CD4-positive, alpha-beta memory T cell (primary cell): ENCODE measurements at regions of chr21 and their contacts with region 1.

Region 1: DNA sequence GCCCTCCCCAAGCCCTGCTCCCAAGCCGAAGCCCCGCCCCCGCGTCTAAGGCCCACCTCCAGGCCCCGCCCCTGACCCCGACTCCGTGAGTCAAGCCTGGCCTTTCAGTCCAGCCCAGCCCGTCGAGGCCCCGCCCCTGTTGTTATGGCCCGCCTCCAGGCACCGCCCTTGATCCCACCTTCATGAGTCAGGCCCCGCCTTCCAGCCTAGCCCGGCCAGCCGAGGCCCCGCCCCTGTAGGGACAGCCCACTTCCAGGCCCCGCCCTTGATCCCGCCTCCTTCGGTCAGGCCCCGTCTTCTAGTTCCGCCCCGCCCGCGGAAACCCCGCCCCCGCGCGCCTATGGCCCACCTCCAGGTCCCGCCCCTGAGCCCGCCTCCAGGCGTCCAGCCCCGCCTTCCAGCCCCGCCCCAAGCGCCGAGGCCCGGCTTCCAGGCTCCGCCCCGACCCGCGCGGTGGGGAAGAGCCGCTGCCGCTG is 247 bp upstream of the DOP1B start:
- DNase-seq: peak; percentile 99 to 100 (median 100)
- H3K4me3 ChIP-seq: peak overlapping the region; percentile 63 to 70
- H3K4me3 Mint-ChIP-seq: peak overlapping the region; percentile 79 to 92 (median 86)
- H3K27ac ChIP-seq: peak overlapping the region; percentile 64
- H3K27ac Mint-ChIP-seq: peak overlapping the region; percentile 36 to 87 (median 60)
- H3K4me1 ChIP-seq: peaks cover 26% of the 10 kb centered on the region
- H3K4me1 Mint-ChIP-seq: peaks cover 23 to 57% (median 34%) of the 10 kb centered on the region in 4 donors
- H3K27me3 ChIP-seq: no peaks in the 10 kb centered on the region
- H3K27me3 Mint-ChIP-seq: no peaks in the 10 kb centered on the region

Region 2: GRCh38 chr21:36141513-36141925 is 14.9 kb before region 1 on chr21:
- CTCF ChIA-PET with region 1: interaction called, 133 read pairs
- POLR2A ChIA-PET with region 1: interaction called, 15 read pairs
- intact Hi-C with region 1: loop called (anchors 1 kb)
- DNase-seq: peak; percentile 87 to 96 (median 89)
- H3K4me3 ChIP-seq: no peak overlapping the region
- H3K4me3 Mint-ChIP-seq: peak overlapping the region in 5 of 8 donors; percentile 7 to 53 (median 12)
- H3K27ac ChIP-seq: peak overlapping the region; percentile 54
- H3K27ac Mint-ChIP-seq: peak overlapping the region; percentile 69 to 95 (median 89)
- H3K4me1 ChIP-seq: peaks cover 40% of the 10 kb centered on the region
- H3K4me1 Mint-ChIP-seq: peaks cover 25 to 50% (median 29%) of the 10 kb centered on the region in 4 donors
- H3K27me3 ChIP-seq: no peaks in the 10 kb centered on the region
- H3K27me3 Mint-ChIP-seq: no peaks in the 10 kb centered on the region

Region 3: GRCh38 chr21:36209626-36210171 is 53.3 kb after region 1 on chr21:
- CTCF ChIA-PET with region 1: interaction called, 69 read pairs
- POLR2A ChIA-PET with region 1: interaction called, 3 read pairs
- intact Hi-C with region 1: loop called (anchors 1 kb)
- DNase-seq: peak; percentile 46 to 53 (median 49)
- H3K4me3 ChIP-seq: no peak overlapping the region
- H3K4me3 Mint-ChIP-seq: no peak overlapping the region
- H3K27ac ChIP-seq: no peak overlapping the region
- H3K27ac Mint-ChIP-seq: peak overlapping the region in 3 of 7 donors; percentile 2 to 22 (median 10)
- H3K4me1 ChIP-seq: no peaks in the 10 kb centered on the region
- H3K4me1 Mint-ChIP-seq: peaks cover 3 to 8% (median 5%) of the 10 kb centered on the region in 4 donors
- H3K27me3 ChIP-seq: no peaks in the 10 kb centered on the region
- H3K27me3 Mint-ChIP-seq: no peaks in the 10 kb centered on the region

Region 4: DNA sequence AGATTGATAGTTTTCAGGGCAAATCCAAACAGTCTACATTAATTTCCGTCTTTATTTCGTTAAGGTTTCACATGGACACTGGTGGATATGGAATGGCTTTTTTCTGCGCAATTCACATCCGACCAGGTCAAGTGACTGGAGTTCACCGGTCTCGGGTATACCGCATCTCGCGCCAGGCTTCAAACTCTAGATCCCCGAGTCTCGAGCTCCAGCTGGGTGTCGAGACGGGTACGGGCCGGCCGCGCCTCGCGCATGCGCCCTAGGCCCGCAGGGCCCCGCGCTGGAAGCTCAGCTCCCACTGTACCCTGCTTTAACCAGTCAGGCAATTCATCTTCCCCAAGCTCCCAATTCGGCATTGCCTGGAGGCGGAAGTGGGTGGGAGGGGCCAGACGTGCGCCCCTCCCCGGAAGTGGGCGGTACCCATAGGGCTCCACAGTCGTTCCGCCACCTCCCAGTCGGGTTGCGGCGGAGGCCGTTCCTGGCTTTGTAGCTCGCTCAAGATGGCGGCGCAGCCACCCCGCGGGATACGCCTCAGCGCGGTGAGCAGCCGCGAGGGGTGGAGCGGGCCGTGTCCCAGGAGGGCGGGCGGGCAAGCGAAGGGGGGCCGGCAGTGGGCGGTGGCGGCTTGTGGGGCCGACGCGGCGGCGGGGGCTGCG is 163.5 kb after region 1 on chr21 and contains the start of gene MORC3:
- CTCF ChIA-PET with region 1: interaction called, 38 read pairs
- POLR2A ChIA-PET with region 1: interaction called, 28 read pairs
- intact Hi-C with region 1: loop called (anchors 1 kb)
- DNase-seq: peak; percentile 96 to 98 (median 97)
- H3K4me3 ChIP-seq: peak within 1 kb of the TSS; percentile 75 to 98
- H3K4me3 Mint-ChIP-seq: peak within 1 kb of the TSS; percentile 94 to 98 (median 96)
- H3K27ac ChIP-seq: peak within 1 kb of the TSS; percentile 90
- H3K27ac Mint-ChIP-seq: peak within 1 kb of the TSS; percentile 89 to 99 (median 97)
- H3K4me1 ChIP-seq: peaks cover 28% of the 10 kb centered on the region
- H3K4me1 Mint-ChIP-seq: peaks cover 18 to 46% (median 34%) of the 10 kb centered on the region in 4 donors
- H3K27me3 ChIP-seq: no peaks in the 10 kb centered on the region
- H3K27me3 Mint-ChIP-seq: no peaks in the 10 kb centered on the region
- total RNA-seq, gene MORC3: 105 to 108 TPM

Region 5: GRCh38 chr21:37072988-37073416 is 916.6 kb after region 1 on chr21 and contains the starts of genes PIGP and TTC3:
- CTCF ChIA-PET with region 1: no interaction called
- POLR2A ChIA-PET with region 1: no interaction called
- intact Hi-C with region 1: loop called (anchors 1 kb)
- DNase-seq: peak; percentile 93 to 97 (median 96)
- H3K4me3 ChIP-seq: peak within 1 kb of the TSS; percentile 83 to 91
- H3K4me3 Mint-ChIP-seq: peak within 1 kb of the TSS; percentile 95 to 100 (median 98)
- H3K27ac ChIP-seq: peak within 1 kb of the TSS; percentile 91
- H3K27ac Mint-ChIP-seq: peak within 1 kb of the TSS; percentile 92 to 100 (median 98)
- H3K4me1 ChIP-seq: peaks cover 36% of the 10 kb centered on the region
- H3K4me1 Mint-ChIP-seq: peaks cover 31 to 63% (median 44%) of the 10 kb centered on the region in 4 donors
- H3K27me3 ChIP-seq: no peaks in the 10 kb centered on the region
- H3K27me3 Mint-ChIP-seq: no peaks in the 10 kb centered on the region
- total RNA-seq, gene PIGP: 17.2 to 19.7 TPM
- total RNA-seq, gene TTC3: 163 to 171 TPM